Activated T-helper 2 cell treated with anti-CD3 and anti-CD28 coated beads, Interferon-gamma antibody, Interleukin-2, Interleukin-4, amounts not matched to agents 10 μg/mL and 5 μg/mL and 100 μg/mL, durations not matched to agents 14 hours and 24 hours and 36 hours (primary cell): ENCODE measurements at regions of chr2 and their contacts with region 1.

Region 1: DNA sequence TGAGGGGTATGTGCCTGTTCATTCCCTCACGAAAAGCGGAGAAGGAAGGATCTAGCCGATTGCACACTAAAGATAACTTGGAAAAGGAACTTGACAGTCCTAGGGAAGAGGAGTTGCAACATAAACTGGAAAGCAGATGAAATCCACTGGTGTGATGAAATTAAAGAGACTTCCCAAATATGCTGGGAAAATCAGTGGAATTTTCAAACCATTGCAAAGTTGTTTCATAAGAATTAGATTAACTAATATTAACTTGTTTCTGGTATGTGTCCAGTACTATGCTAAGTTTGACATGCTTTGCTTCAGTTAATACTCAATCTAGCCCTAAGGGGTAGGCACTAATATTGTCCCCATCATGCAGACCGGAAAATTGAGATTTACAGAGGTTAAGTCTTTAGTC is 222.7 kb downstream of the IKZF2 start:
- DNase-seq: no peak
- H3K4me3 Mint-ChIP-seq: no peak overlapping the region
- H3K27ac Mint-ChIP-seq: no peak overlapping the region
- H3K4me1 Mint-ChIP-seq: peaks cover 38% of the 10 kb centered on the region
- H3K27me3 Mint-ChIP-seq: no peaks in the 10 kb centered on the region

Region 2: GRCh38 chr2:212915121-212915782 is 13.4 kb before region 1 on chr2:
- intact Hi-C with region 1: loop called (anchors 1 kb)
- DNase-seq: no peak
- H3K4me3 Mint-ChIP-seq: peak overlapping the region; percentile 11
- H3K27ac Mint-ChIP-seq: peak overlapping the region; percentile 54
- H3K4me1 Mint-ChIP-seq: peaks cover 30% of the 10 kb centered on the region
- H3K27me3 Mint-ChIP-seq: peaks cover 6% of the 10 kb centered on the region

Region 3: DNA sequence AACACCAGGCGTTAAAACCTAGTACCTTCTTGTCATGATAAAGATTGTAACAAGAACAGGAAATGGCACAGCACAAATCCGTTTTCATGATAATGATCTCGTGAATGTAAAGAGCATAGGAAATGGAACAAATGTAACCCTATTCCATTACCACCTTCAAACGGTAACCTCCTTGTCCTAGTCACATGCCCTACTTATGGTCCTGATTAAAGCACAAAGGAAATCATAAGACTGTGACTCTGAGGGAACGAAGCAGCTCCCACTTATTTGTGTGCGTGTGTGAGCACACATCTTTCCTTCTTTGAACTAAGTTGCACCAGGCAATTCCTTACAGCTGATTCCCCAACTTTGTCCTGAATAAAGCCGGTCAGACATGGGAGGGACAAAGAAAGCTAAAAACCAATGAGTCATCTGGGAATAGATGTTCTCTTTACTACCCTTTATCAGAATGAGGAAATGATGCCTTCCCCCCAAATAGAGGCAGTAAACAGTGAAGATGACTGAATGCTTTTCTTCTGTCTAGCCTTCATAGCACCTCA is 30.1 kb after region 1 on chr2:
- intact Hi-C with region 1: loop called (anchors 1 kb)
- DNase-seq: no peak
- H3K4me3 Mint-ChIP-seq: peak overlapping the region; percentile 19
- H3K27ac Mint-ChIP-seq: peak overlapping the region; percentile 75
- H3K4me1 Mint-ChIP-seq: peaks cover 46% of the 10 kb centered on the region
- H3K27me3 Mint-ChIP-seq: no peaks in the 10 kb centered on the region

Region 4: DNA sequence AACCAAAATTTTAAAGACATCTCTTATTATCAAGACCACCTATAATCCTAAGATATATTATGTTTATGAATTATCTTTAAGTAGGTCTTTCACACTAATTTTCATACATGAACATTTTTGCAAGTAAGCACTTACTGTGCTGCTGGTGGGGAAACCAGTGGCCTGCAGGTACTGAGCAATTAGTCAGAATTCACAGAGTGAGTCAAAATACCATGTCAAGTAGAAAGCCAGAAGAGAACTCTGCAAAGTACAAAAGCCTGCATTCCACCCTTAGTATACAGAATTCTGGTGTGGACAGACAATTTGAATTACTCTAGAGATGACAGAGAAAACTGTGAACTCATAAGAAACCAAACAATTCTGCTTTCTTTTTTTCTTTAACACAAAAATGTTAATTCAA is 39.6 kb after region 1 on chr2:
- intact Hi-C with region 1: loop called (anchors 1 kb)
- DNase-seq: no peak
- H3K4me3 Mint-ChIP-seq: no peak overlapping the region
- H3K27ac Mint-ChIP-seq: peak overlapping the region; percentile 78
- H3K4me1 Mint-ChIP-seq: peaks cover 31% of the 10 kb centered on the region
- H3K27me3 Mint-ChIP-seq: peaks cover 2% of the 10 kb centered on the region